Activated naive CD4-positive, alpha-beta T cell treated with anti-CD3 and anti-CD28 coated beads for 36 hours (primary cell): ENCODE measurements at regions of chr11 and their contacts with region 1.

Region 1: DNA sequence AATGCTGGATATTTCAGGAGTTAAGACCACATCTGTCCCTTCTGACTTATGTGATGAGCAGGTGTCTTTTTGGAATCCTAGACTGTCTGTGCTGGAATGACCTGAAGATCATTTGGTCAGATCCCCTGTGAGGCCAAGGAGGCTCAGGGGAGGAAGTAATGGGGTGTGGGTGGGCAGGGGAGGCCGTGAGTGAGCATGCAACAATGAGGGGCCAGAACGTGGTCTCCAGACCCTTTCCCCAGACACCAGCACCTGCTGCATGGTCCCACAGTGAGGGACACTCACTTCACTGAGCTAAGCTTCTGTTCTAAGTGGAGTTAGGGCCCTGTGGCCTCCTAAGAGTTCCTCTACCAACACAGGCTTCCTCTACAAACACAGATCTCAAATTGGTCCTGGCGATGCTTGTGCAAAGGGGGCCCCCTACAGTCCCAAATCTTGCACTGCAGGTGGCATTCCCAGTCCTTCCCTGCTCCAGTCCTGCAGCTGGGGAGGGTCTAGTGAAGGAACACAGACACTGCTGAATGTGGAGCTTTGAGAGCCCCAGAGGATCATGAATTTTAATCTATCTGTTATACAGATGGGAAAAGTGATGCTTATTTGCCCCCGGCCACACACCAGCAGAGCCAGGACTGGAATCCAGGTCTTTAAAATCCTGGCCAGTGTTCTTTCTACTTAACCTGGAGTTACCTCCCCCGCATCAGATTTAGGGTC is 7.4 kb downstream of the USP2 start:
- DNase-seq: peak; percentile 63
- H3K4me3 Mint-ChIP-seq: no peak overlapping the region
- H3K27ac Mint-ChIP-seq: no peak overlapping the region
- H3K4me1 Mint-ChIP-seq: peaks cover 4% of the 10 kb centered on the region
- H3K27me3 Mint-ChIP-seq: peaks cover 14% of the 10 kb centered on the region

Region 2: GRCh38 chr11:119363851-119364590 is 10.1 kb before region 1 on chr11:
- CTCF ChIA-PET with region 1: interaction called, 132 read pairs
- intact Hi-C with region 1: no loop called
- DNase-seq: peak; percentile 42
- H3K4me3 Mint-ChIP-seq: peak overlapping the region; percentile 63
- H3K27ac Mint-ChIP-seq: no peak overlapping the region
- H3K4me1 Mint-ChIP-seq: peaks cover 10% of the 10 kb centered on the region
- H3K27me3 Mint-ChIP-seq: peaks cover 39% of the 10 kb centered on the region

Region 3: DNA sequence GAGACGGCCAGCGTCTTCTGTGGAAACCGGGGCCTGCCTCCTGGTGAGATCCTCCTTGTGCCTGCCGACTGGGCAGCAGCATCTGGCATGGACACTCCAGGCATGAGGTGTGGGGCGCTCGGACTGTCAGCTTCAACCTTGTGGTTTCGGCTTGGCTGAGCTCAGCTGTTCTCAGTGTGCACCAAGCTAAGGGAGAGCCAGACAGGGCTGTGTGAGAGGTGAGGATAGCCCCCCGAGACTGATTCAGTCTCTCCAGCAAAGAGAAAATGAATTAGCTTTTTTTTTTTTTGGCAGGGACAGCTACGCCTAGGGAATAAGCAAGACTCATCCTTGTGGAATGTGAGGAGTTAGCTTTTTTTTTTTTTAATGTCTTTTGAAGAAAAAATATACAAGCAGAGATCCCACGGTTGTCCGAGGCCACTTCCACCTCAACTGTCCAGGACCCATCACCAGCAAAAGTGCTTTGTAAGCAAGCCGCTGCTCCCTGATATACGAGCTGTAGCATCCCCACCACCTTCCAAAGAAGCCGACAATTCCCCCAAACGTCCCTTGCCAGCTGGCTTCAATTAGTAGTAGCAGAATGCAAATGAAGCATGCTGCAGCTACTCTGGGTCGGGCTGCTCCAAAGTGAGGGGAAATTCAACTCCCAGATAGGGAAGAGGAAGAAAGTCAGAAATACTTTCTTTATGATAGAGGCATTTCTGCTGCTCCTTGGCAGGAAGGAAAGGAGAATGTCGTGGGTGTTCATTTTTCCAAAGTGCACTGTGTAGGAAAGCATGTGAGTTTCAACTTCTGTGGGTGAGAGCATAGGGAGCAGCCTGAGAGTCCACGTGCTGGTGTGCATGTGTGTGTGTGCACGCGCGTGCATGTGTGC is 58.6 kb after region 1 on chr11:
- CTCF ChIA-PET with region 1: no interaction called
- intact Hi-C with region 1: no loop called
- DNase-seq: no peak
- H3K4me3 Mint-ChIP-seq: no peak overlapping the region
- H3K27ac Mint-ChIP-seq: no peak overlapping the region
- H3K4me1 Mint-ChIP-seq: no peaks in the 10 kb centered on the region
- H3K27me3 Mint-ChIP-seq: peaks cover 21% of the 10 kb centered on the region